Activated naive CD8-positive, alpha-beta T cell treated with anti-CD3 and anti-CD28 coated beads, Interleukin-2, amount 10 ng/mL, durations not matched to agents 7 days and 5 days (primary cell): ENCODE measurements at regions of chr11 and their contacts with region 1.

Region 1: GRCh38 chr11:78079232-78080083 is at the start of gene NDUFC2:
- DNase-seq: peak; percentile 79
- ATAC-seq: peak; percentile 73
- H3K4me3 Mint-ChIP-seq: peak within 1 kb of the TSS; percentile 89
- H3K27ac Mint-ChIP-seq: peak within 1 kb of the TSS; percentile 85
- H3K4me1 Mint-ChIP-seq: peaks cover 49% of the 10 kb centered on the region
- H3K27me3 Mint-ChIP-seq: no peaks in the 10 kb centered on the region
- total RNA-seq, gene NDUFC2: 162 to 163 TPM

Region 2: GRCh38 chr11:78094250-78094649 is 14.8 kb after region 1 on chr11:
- POLR2A ChIA-PET with region 1: interaction called, 11 read pairs
- DNase-seq: no peak
- ATAC-seq: peak; percentile 99
- H3K4me3 Mint-ChIP-seq: peak overlapping the region; percentile 28
- H3K27ac Mint-ChIP-seq: peak overlapping the region; percentile 85
- H3K4me1 Mint-ChIP-seq: peaks cover 11% of the 10 kb centered on the region
- H3K27me3 Mint-ChIP-seq: no peaks in the 10 kb centered on the region

Region 3: DNA sequence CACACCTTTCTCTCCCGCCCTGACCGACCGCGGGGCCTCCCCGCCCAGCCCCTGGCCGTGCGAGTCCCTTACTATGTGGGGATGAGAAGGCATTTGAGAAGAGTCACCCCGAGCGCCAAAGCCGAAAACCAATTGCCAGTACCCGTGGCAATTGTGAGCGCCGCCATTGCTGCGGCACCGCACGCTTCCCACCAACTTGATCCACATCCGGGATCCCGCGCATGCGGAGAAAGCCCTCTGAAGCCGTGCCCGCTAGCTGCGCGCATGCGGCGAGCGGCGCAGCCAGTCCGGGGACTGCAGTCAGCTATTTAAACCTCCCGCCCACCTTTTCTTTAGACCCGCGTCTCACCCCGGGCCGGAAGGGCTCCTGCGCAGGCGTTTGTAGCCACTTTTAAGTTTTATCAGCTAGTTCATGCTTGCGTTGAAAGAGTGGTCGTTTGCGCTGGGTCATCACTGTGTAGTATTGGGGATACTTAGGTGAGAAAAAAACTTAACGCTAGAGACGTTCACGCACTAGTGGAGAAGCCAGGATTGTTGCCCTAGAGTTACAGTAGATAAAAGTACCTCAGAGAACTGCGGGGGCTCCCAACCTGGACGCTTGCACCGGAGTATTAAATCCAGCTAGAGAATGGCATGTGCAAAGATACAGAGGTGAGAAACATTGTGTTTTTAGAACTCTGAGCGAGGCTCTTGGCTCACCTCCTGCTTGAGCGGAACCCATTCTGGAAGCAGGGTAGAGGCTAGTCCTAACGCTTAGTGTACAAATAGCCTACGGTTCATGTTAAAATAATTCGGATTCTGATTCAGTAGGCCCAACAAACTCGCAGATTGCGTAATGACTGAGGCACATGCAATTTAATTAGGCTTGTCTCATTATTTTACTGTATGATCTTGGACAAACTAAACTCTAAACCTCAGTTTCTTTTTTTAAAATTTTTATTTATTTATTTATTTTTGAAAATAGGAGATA is 60.2 kb after region 1 on chr11 and contains the start of gene ALG8:
- POLR2A ChIA-PET with region 1: interaction called, 21 read pairs
- DNase-seq: peak; percentile 95
- ATAC-seq: peak; percentile 98
- H3K4me3 Mint-ChIP-seq: peak within 1 kb of the TSS; percentile 93
- H3K27ac Mint-ChIP-seq: peak within 1 kb of the TSS; percentile 92
- H3K4me1 Mint-ChIP-seq: peaks cover 44% of the 10 kb centered on the region
- H3K27me3 Mint-ChIP-seq: no peaks in the 10 kb centered on the region
- total RNA-seq, gene ALG8: 36.7 to 44.3 TPM